ENCODE measurements at regions of chr13 and their contacts with region 1.

Region 1: GRCh38 chr13:41588899-41589298 is 131.5 kb downstream of the RGCC start:
- DNase-seq: no peak
- H3K4me3 ChIP-seq: no peak overlapping the region
- H3K27ac ChIP-seq: no peak overlapping the region
- H3K4me1 ChIP-seq: no peaks in the 10 kb centered on the region
- H3K27me3 ChIP-seq: no peaks in the 10 kb centered on the region
- CTCF ChIP-seq: no peak
- POLR2A ChIP-seq: no peak

Region 2: DNA sequence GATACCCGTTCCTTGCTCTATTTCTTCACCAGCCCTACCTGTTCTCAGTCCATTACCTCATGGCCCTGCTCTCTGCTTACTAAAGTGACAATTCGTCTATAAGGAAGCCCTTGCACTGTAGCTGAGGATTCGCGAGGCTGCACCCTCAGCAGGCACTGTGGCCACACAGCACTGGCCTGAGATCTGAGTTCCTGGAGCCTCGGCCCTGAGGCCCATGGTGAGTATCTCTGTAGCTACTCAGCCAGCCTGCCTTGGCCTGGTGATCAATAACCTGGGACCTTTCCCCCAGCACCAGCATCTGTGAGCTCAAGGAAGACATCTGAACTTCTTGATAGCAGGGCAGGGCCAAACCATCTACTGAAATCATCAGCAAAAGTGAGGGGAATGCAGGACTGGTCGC is 40.9 kb before region 1 on chr13:
- intact Hi-C with region 1: loop called (anchors 1 kb)
- DNase-seq: no peak
- H3K4me3 ChIP-seq: no peak overlapping the region
- H3K27ac ChIP-seq: peak overlapping the region; percentile 85
- H3K4me1 ChIP-seq: peaks cover 24% of the 10 kb centered on the region
- H3K27me3 ChIP-seq: no peaks in the 10 kb centered on the region
- CTCF ChIP-seq: no peak
- POLR2A ChIP-seq: no peak

Measured in vagina (tissue), 2 donors.